Activated naive CD4-positive, alpha-beta T cell treated with anti-CD3 and anti-CD28 coated beads for 36 hours (primary cell): ENCODE measurements at regions of chr9 and their contacts with region 1.

Region 1: DNA sequence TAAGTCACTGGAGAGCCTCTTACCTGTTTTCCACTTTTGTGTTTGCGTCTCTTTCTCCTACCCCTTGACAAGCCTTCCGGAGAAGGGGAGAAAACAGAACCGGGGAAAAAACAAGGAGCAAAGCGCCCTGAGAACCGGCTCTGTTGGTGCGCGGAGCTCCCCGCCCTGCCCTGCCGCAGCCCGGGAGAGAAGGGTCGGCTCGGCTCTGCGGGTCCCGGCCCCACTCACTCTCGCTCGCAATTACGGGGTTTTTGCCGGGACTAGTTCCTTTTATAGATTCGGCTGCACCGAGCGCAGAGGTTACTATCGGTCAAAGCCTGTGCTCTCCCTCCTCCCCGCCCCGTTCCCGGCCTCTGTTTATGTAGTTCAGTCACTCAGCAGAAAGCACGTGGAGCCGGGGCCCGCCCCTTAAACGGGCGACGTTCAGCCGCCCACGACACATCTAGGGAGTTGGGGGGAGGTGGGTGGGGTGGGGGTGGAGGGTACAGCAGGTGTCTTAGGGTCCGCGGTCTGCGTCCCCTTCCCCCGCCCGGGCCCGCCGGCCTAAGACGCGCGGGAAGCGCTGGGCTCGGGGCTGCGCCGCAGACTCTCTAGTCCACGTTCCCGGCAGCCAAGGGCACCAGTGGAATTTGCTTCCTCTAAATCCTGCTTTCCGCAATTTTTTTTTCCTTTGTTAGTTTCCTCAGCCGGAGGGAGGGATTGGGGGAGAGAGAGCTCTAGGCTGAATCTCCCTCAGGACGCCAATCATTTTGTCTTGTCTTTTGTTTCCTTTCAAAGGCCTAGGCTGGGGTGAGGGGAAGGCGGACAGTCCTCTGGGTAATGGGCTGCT is at the start of gene ABCA1:
- DNase-seq: peak; percentile 94
- H3K4me3 Mint-ChIP-seq: peak within 1 kb of the TSS; percentile 86
- H3K27ac Mint-ChIP-seq: peak within 1 kb of the TSS; percentile 80
- H3K4me1 Mint-ChIP-seq: peaks cover 21% of the 10 kb centered on the region
- H3K27me3 Mint-ChIP-seq: peaks cover 2% of the 10 kb centered on the region
- total RNA-seq, gene ABCA1: 31.3 to 31.5 TPM

Region 2: GRCh38 chr9:104863180-104863883 is 64.8 kb before region 1 on chr9:
- CTCF ChIA-PET with region 1: interaction called, 11 read pairs
- intact Hi-C with region 1: loop called (anchors 1 kb)
- DNase-seq: peak; percentile 58
- H3K4me3 Mint-ChIP-seq: no peak overlapping the region
- H3K27ac Mint-ChIP-seq: no peak overlapping the region
- H3K4me1 Mint-ChIP-seq: peaks cover 17% of the 10 kb centered on the region
- H3K27me3 Mint-ChIP-seq: no peaks in the 10 kb centered on the region

Region 3: GRCh38 chr9:104875897-104876296 is 52.2 kb before region 1 on chr9:
- CTCF ChIA-PET with region 1: no interaction called
- intact Hi-C with region 1: no loop called
- DNase-seq: no peak
- H3K4me3 Mint-ChIP-seq: no peak overlapping the region
- H3K27ac Mint-ChIP-seq: no peak overlapping the region
- H3K4me1 Mint-ChIP-seq: peaks cover 12% of the 10 kb centered on the region
- H3K27me3 Mint-ChIP-seq: no peaks in the 10 kb centered on the region

Region 4: DNA sequence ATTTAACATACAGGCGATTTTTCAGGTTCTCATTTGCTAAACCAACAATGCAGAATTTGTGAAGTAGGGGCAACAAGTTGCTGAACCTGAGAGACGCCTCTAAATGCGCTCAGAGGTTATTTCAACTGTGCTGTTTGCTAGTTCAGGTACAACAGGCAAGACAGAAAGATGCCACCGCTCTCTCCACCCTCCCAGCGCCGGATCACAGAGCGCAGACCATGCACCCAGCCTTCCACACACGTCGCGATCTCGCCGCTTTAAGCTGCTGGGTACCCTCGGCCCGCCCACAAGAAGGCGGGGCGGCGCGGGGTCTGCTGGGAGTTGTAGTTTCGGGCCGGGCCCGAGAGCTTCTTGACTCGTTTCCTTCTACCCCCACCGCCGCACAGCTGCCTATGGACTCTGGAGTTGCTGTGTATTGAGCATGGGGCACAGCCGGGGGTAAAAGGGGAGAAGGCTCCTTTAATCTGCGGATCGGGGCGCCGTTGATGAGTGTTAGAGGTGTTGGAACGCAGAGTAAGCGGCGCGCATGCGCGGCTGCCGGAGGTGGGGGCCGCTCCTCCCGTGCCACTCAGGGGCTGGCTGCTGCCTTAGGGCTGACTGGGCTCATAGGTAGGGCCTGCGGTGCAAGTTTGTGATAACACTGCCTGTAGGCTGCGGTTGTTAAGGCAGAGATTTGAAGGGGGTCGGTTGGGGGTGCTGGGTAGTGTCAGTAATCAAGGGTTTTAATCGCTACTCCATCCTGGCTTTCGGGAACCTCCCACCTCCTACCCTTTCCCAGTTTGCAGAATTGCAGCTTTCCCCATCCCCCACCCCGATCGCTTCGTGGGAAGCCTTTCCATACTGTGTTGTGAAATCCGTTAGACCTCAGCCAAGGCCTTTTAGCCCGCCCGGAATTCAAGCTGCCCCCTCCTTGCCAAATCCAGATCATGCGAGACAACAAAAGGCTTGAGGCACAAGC is 40.2 kb after region 1 on chr9:
- CTCF ChIA-PET with region 1: interaction called, 5 read pairs
- intact Hi-C with region 1: loop called (anchors 1 kb)
- DNase-seq: peak; percentile 92
- H3K4me3 Mint-ChIP-seq: peak overlapping the region; percentile 95
- H3K27ac Mint-ChIP-seq: peak overlapping the region; percentile 97
- H3K4me1 Mint-ChIP-seq: peaks cover 12% of the 10 kb centered on the region
- H3K27me3 Mint-ChIP-seq: no peaks in the 10 kb centered on the region

Region 5: DNA sequence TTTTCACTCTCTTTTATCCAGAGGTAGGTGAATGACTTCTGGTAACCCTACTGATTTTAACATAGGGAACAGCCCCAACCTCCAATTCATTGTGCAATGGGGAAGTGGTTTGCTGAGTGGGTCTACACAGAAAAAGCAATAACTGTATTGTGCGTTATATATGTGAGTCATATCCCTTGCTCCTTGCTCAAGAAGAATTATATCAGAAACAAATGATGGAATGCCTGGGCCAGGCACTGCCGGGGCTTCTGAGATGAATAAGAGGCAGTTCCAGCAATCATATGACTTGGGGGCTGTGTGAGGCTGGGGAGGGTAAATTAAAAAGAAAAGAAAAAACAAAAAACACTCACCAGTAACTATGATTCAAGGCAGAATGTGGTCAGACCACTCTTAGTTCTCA is 79.0 kb after region 1 on chr9:
- CTCF ChIA-PET with region 1: no interaction called
- intact Hi-C with region 1: loop called (anchors 1 kb)
- DNase-seq: peak; percentile 54
- H3K4me3 Mint-ChIP-seq: no peak overlapping the region
- H3K27ac Mint-ChIP-seq: no peak overlapping the region
- H3K4me1 Mint-ChIP-seq: peaks cover 7% of the 10 kb centered on the region
- H3K27me3 Mint-ChIP-seq: no peaks in the 10 kb centered on the region

Region 6: DNA sequence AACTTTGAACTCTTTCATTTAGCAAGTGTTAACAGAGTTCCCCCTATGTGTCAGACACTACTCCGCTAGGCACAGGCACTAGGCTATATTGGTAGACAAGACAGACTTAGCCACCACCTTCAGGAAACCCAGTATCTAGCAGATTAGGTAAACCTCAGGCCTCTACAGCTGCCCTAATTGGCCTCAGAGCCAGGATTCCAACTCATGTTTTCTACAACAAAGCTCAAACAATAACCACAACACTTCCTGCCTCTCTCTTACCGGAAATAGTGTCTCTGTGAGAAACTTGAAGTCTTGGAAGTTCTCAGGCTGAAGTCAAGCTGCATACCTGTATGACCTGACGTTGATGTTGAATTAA is 199.7 kb after region 1 on chr9:
- CTCF ChIA-PET with region 1: interaction called, 4 read pairs
- intact Hi-C with region 1: loop called (anchors 1 kb)
- DNase-seq: peak; percentile 74
- H3K4me3 Mint-ChIP-seq: no peak overlapping the region
- H3K27ac Mint-ChIP-seq: peak overlapping the region; percentile 28
- H3K4me1 Mint-ChIP-seq: peaks cover 44% of the 10 kb centered on the region
- H3K27me3 Mint-ChIP-seq: no peaks in the 10 kb centered on the region

Region 7: DNA sequence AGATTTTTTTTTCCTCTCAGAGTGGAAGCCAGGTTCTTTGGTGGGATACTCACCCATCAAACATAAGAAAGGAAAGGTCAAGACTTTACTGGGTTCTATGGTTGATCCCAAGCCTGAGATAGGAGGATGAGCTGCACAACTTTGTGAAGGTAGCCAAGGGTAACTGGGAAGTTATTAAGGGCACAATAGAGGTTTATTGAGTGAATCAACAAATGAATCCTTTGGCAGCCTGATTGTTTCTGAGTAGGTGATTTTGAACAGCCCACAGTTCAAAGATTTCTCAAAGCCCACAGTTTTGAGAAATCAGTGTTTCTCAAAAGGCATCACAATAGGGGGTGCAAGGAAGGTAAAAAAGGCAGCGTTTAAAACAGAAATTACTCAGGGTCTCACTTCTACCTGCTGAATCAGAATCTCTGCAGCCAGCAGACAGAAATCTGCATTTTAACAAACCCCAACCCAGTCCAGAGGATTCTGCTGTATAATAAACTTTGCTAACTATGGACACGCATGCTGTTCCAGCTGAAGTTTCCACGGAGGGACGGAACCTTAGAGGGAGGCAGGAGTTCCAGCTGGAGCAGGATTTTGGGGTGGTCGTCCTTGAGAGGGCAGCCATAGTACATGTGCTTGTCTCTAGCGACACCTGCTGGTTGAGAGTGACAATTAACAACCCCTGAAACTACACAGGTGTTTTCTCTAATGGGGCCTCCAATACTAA is 487.0 kb after region 1 on chr9:
- CTCF ChIA-PET with region 1: interaction called, 4 read pairs
- intact Hi-C with region 1: loop called (anchors 1 kb)
- DNase-seq: peak; percentile 72
- H3K4me3 Mint-ChIP-seq: no peak overlapping the region
- H3K27ac Mint-ChIP-seq: no peak overlapping the region
- H3K4me1 Mint-ChIP-seq: peaks cover 2% of the 10 kb centered on the region
- H3K27me3 Mint-ChIP-seq: peaks cover 27% of the 10 kb centered on the region